Prostate gland (tissue), 2 donors: ENCODE measurements at regions of chr19 and their contacts with region 1.

Region 1: GRCh38 chr19:19063183-19064097 is at the start of gene SLC25A42:
- DNase-seq: peak; percentile 99
- H3K4me3 ChIP-seq: peak within 1 kb of the TSS; percentile 76 to 93
- H3K27ac ChIP-seq: peak within 1 kb of the TSS; percentile 77 to 82
- H3K4me1 ChIP-seq: no peaks in the 10 kb centered on the region
- H3K27me3 ChIP-seq: no peaks in the 10 kb centered on the region
- CTCF ChIP-seq: peak in 2 of 4 experiments; percentile 13 to 20
- POLR2A ChIP-seq: no peak
- total RNA-seq, gene SLC25A42: 11.5 to 18.6 TPM

Region 2: DNA sequence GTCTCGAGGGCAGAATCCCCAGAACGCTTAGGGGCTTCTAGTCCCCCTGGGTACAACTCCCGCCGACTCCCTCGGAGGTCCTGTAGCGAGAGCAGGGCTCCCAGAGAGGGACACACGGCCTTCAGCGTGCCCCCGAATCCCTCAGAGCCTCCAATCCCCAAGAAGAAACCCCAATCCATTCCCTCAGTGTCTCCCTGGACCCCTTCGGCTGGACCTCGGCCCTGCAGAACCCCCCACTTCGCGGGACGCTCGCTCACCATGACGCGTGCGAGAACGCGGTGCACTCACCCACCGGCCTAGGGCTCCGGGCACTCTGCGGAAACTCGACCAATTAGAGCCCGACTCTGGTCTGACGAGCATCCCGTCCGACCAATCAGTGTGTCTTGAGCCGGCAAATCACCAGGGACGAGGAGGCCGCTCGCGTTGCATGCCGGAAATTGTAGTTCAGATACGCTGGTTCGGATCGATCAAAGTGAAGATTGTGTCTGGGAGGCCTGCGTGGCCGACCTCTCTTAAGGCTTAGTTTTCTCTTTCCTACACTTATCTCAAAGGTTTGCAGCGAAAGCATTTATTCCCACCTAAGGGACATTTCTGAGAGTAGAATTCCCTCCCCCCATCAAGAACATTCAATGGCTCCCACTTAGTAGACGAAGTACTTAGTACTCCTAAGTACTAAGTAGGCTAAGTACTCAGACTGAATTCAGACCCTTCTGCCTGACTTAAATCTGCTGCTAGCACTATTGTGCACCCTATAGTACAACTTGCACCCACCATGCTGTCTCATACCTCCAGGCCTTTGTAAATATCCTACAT is 74.9 kb after region 1 on chr19 and contains the start of gene TMEM161A:
- intact Hi-C with region 1: loop called (anchors 2 kb)
- DNase-seq: peak; percentile 97
- H3K4me3 ChIP-seq: peak within 1 kb of the TSS; percentile 57 to 68
- H3K27ac ChIP-seq: peak within 1 kb of the TSS in 1 of 2 donors; percentile 48
- H3K4me1 ChIP-seq: peaks cover 6% of the 10 kb centered on the region
- H3K27me3 ChIP-seq: no peaks in the 10 kb centered on the region
- CTCF ChIP-seq: no peak
- POLR2A ChIP-seq: peak; percentile 46
- total RNA-seq, gene TMEM161A: 24.0 to 40.9 TPM

Region 3: GRCh38 chr19:19269952-19270694 is 206.7 kb after region 1 on chr19:
- intact Hi-C with region 1: no loop called
- DNase-seq: no peak
- H3K4me3 ChIP-seq: no peak overlapping the region
- H3K27ac ChIP-seq: no peak overlapping the region
- H3K4me1 ChIP-seq: no peaks in the 10 kb centered on the region
- H3K27me3 ChIP-seq: no peaks in the 10 kb centered on the region
- CTCF ChIP-seq: no peak
- POLR2A ChIP-seq: no peak